Activated naive CD4-positive, alpha-beta T cell treated with anti-CD3 and anti-CD28 coated beads for 36 hours (primary cell): ENCODE measurements at regions of chr1 and their contacts with region 1.

Region 1: DNA sequence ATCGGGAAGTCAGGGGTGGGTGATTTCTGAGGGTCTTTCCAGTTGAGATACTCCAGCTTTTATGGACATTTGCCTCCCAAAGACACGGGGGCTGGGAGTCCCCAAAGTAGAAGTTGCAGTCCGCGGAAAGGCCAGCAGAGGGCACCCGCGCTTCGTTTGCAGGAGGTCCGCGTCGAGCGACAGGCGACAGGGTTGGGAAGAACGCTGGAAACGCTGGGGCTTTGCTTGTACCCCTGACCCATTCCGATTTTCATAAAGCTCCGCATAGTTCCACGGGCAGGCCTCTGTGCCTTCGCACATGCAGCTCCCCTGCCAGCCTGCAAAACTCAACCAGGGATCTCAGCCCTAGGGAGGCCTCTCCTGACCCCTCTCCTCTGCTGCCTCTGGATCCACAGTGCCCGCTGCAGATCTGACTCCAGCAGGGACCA is 44.2 kb upstream of the LAPTM5 start:
- DNase-seq: peak; percentile 88
- H3K4me3 Mint-ChIP-seq: no peak overlapping the region
- H3K27ac Mint-ChIP-seq: no peak overlapping the region
- H3K4me1 Mint-ChIP-seq: peaks cover 3% of the 10 kb centered on the region
- H3K27me3 Mint-ChIP-seq: peaks cover 28% of the 10 kb centered on the region

Region 2: DNA sequence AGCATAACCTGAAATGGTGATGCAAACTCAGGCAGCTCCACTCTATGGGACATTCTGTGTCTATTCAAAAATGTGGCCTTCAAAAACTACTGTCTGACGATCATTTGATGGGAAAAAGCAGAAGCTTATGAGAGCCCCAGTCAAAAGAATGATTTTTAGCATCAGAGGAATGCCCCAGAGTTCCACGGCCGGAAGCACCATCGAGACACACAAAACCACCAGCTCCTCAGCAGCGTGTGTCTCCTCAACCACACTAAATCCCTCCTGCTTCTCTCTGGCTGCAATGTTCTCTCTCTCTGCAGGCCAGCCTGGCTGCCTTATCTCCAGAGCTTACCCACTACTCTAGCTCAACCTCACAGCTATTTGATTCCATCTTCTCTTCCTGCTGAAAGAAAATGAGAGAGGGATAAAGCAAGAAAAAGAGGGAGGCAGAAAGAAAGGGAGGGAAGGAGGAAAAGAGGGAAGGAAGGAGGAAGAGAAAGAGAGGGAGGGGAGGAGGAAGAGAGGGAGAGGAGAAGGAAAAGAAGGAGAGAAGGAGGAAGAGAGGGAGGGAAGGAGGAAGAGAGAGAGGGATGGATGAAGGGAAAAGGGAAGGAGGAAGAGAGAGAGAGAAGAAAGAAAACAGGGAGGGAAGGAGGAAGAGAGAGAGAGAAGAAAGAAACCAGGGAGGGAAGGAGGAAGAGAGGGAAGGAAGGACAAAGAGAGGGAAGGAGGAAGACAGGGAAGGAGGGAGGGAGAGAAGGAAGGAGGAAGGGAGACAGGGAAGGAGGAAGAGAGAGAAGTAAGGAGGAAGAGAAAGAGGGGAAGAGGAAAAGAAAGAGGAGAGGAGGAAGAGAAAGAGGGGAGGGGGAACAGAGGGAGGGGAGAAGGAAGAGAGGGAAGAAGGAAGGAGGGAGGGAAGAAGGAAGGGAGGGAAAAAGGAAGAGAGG is 10.7 kb before region 1 on chr1:
- CTCF ChIA-PET with region 1: interaction called, 17 read pairs
- intact Hi-C with region 1: no loop called
- DNase-seq: peak; percentile 44
- H3K4me3 Mint-ChIP-seq: no peak overlapping the region
- H3K27ac Mint-ChIP-seq: no peak overlapping the region
- H3K4me1 Mint-ChIP-seq: peaks cover 6% of the 10 kb centered on the region
- H3K27me3 Mint-ChIP-seq: peaks cover 3% of the 10 kb centered on the region

Region 3: GRCh38 chr1:30853350-30853749 is 51.6 kb after region 1 on chr1:
- CTCF ChIA-PET with region 1: interaction called, 13 read pairs
- intact Hi-C with region 1: no loop called
- DNase-seq: no peak
- H3K4me3 Mint-ChIP-seq: no peak overlapping the region
- H3K27ac Mint-ChIP-seq: no peak overlapping the region
- H3K4me1 Mint-ChIP-seq: peaks cover 2% of the 10 kb centered on the region
- H3K27me3 Mint-ChIP-seq: peaks cover 10% of the 10 kb centered on the region

Region 4: GRCh38 chr1:30911046-30911954 is 109.5 kb after region 1 on chr1:
- CTCF ChIA-PET with region 1: interaction called, 177 read pairs
- intact Hi-C with region 1: loop called (anchors 1 kb)
- DNase-seq: peak; percentile 76
- H3K4me3 Mint-ChIP-seq: no peak overlapping the region
- H3K27ac Mint-ChIP-seq: no peak overlapping the region
- H3K4me1 Mint-ChIP-seq: peaks cover 12% of the 10 kb centered on the region
- H3K27me3 Mint-ChIP-seq: peaks cover 29% of the 10 kb centered on the region

Region 5: DNA sequence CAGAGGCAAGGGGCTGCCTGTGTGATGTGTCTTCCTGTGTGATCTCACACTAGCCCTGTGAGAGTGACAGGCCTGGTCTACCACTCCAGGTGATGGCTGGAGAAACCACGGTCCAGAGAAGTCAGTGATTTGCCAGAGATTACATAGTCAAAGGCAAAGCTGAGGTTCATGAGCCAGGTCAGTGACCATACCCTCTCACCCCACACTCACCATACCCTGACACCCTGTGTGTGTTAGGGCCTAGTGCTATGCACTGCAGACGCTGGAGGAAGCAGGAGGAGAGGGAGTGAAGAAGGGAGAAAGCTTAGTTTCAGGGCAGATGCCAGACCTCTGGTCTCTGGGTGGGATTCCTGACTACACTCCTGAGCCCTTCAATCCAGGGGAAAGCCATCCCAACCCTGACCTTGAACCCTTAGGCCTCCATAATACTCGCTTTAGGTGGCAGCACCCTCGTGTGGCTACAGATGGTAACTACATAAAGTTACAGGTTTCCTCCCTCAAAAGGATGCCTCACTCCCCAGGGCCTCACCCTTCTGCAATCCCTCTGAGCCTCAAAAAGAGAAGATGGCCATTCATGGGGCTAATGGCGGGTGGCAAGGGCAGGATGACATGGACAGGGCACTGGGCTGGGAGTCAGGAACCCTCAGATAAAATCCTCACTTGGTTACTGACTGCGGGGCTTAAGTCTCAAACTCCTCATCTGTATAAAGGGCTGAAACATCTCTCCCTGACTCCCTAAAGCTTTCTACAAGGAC is 127.5 kb after region 1 on chr1:
- CTCF ChIA-PET with region 1: interaction called, 35 read pairs
- intact Hi-C with region 1: loop called (anchors 1 kb)
- DNase-seq: peak; percentile 74
- H3K4me3 Mint-ChIP-seq: no peak overlapping the region
- H3K27ac Mint-ChIP-seq: no peak overlapping the region
- H3K4me1 Mint-ChIP-seq: no peaks in the 10 kb centered on the region
- H3K27me3 Mint-ChIP-seq: no peaks in the 10 kb centered on the region

Region 6: GRCh38 chr1:31111290-31111977 is 309.6 kb after region 1 on chr1:
- CTCF ChIA-PET with region 1: no interaction called
- intact Hi-C with region 1: no loop called
- DNase-seq: no peak
- H3K4me3 Mint-ChIP-seq: no peak overlapping the region
- H3K27ac Mint-ChIP-seq: no peak overlapping the region
- H3K4me1 Mint-ChIP-seq: no peaks in the 10 kb centered on the region
- H3K27me3 Mint-ChIP-seq: peaks cover 6% of the 10 kb centered on the region